Thyroid gland (tissue), 4 donors: ENCODE measurements at regions of chr5 and their contacts with region 1.

Region 1: DNA sequence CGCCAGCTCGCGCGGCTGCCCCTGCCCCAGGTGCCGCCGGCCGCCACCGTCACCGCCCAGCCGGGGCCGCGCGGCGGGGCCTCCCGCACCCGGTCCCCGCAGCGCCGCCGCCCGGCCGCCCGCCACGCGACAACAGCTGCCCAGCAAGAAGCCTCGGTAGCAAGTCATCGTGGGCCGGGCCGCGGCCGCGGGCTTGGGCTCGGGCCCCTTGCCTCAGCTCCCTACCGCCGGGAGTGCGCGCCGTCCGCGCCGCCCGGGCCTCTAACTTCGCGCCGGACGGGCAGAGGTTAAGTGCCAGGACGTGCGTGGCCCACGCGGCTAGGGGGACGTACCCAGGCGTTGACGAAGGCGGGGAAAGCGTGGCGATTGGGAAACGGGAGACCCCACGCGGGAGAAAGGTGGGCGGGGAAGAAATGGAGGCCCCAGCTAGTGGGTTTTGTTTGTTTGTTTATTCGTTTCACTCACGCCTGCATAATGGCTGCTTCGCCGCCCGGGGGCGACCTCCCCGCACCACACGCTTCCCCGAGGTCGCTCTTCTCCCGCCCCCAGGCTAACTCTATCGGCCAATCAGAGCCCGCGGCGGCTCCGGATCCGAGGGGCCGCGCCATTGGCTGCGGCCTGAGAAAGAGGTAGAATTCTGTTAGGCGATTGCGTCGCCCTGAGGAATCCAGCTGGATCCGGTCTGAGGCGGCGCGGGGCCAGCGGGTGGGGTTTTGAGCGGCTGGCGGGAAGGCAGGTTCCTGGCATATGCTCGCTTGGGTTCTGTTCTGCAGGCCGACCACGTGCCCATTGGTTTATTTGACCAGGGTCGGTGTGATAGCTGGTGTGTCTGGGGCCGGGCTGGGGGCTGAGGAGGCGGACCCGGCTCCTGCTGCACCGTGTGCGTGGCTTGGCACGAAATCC is at the start of gene NADK2:
- DNase-seq: peak; percentile 96 to 97
- H3K4me3 ChIP-seq: peak within 1 kb of the TSS; percentile 80 to 92 (median 87)
- H3K27ac ChIP-seq: peak within 1 kb of the TSS; percentile 95 to 99 (median 98)
- H3K4me1 ChIP-seq: peaks cover 29 to 39% of the 10 kb centered on the region in 2 donors
- H3K27me3 ChIP-seq: no peaks in the 10 kb centered on the region
- CTCF ChIP-seq: peak; percentile 32 to 95 (median 68)
- POLR2A ChIP-seq: peak; percentile 76 to 98
- total RNA-seq, gene NADK2: 28.8 to 47.2 (median 44.4) TPM

Region 2: GRCh38 chr5:36151434-36152323 is 90.2 kb before region 1 on chr5 and contains the starts of genes LMBRD2 and SKP2:
- intact Hi-C with region 1: loop called (anchors 10 kb)
- DNase-seq: peak; percentile 97 to 98
- H3K4me3 ChIP-seq: peak within 1 kb of the TSS; percentile 77 to 92 (median 80)
- H3K27ac ChIP-seq: peak within 1 kb of the TSS; percentile 56 to 76 (median 60)
- H3K4me1 ChIP-seq: peaks cover 18 to 24% of the 10 kb centered on the region in 2 donors
- H3K27me3 ChIP-seq: no peaks in the 10 kb centered on the region
- CTCF ChIP-seq: no peak
- POLR2A ChIP-seq: peak in 1 of 2 donors; percentile 84
- total RNA-seq, gene LMBRD2: 18.1 to 23.5 (median 19.4) TPM
- total RNA-seq, gene SKP2: 4.8 to 10.3 (median 8.8) TPM